ENCODE measurements at regions of chr1 and their contacts with region 1.

Region 1: GRCh38 chr1:218361298-218362065 is 16.3 kb downstream of the TGFB2 start:
- DNase-seq: no peak
- H3K4me3 ChIP-seq: no peak overlapping the region
- H3K27ac ChIP-seq: peak overlapping the region; percentile 9 to 77 (median 52)
- H3K4me1 ChIP-seq: peaks cover 0 to 61% (median 53%) of the 10 kb centered on the region in 4 donors
- H3K27me3 ChIP-seq: no peaks in the 10 kb centered on the region
- CTCF ChIP-seq: peak in 2 of 4 experiments; percentile 23 to 27
- EP300 ChIP-seq: no peak
- POLR2A ChIP-seq: no peak

Region 2: DNA sequence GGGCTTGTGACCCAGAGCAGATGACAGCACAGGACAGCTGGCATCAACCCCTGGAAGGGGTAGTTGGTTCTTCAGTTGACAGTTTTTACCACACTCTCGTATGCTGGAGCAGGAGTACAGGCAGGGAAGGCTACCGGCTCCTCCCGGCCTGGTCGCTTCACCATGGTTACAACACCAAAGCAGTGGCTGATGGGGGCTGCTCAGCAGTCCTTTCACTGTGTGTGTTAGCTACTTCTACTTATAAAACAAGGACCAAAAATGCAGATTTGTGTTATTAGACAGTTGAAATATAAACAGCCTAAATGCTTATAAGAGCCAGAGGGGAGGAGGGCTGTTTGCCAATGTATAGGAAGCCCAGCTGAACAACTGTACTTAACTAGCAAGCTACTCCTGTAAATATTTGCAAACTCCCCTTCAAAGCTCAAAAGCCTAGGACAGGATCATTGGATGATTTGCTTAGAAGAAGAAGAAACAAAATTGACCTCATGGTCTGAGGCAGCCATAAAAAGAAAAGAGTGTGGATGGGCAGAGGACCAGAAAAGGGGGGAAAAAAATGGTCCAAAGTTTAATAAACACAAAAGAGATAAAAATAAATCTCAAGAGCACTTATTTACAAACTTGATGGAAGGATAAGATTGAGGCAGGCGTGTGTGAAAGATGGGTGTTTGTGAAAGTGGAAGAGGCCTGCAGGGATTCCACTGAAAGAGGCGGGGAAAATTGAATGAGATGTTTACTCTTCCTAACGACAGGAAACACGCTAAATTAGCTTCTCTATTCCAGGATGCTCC is 40.7 kb after region 1 on chr1:
- intact Hi-C with region 1: loop called (anchors 5 kb)
- DNase-seq: peak; percentile 70
- H3K4me3 ChIP-seq: no peak overlapping the region
- H3K27ac ChIP-seq: peak overlapping the region; percentile 63 to 81 (median 72)
- H3K4me1 ChIP-seq: peaks cover 0 to 35% (median 26%) of the 10 kb centered on the region in 4 donors
- H3K27me3 ChIP-seq: no peaks in the 10 kb centered on the region
- CTCF ChIP-seq: no peak
- EP300 ChIP-seq: no peak
- POLR2A ChIP-seq: no peak